ENCODE measurements at regions of chr14 and their contacts with region 1.

Region 1: DNA sequence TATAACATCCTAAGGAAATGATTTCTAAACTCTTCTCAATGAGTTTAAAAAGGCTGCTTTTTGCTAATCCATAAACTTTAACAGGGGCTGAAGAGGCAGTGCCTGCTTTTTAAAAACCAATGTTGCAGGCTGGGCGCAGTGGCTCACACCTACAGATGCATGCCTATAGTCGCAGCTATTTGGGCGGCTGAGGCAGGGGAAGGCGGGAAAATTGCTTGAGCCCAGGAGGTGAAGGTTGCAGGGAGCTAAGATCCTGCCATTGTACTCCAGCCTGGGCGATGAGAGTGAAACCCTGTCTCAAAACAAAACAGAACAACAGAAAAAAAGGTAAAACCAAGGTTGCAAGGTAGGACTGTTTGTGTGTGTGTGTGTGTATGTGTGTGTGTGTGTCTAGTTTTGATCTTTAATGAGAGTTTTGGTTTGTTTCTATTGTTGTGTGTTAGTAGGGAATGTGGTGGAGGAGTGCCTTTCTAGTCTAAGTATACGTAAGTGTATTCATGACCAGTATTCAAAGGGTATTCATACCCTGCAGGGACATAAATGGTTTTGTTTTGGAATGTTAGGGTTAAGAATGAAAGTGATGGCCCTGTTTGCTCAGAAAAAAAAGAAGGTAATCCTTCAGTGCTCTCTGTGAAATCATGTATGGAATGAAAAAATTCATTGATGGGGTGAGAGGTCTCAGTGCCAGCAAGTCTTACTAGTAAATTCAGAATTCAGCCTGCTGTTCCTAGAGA is 531.0 kb downstream of the DIO2 start:
- DNase-seq: no peak
- ATAC-seq: no peak
- H3K4me3 ChIP-seq: no peak overlapping the region
- H3K27ac ChIP-seq: no peak overlapping the region
- H3K4me1 ChIP-seq: no peaks in the 10 kb centered on the region
- H3K27me3 ChIP-seq: no peaks in the 10 kb centered on the region
- CTCF ChIP-seq: no peak

Region 2: DNA sequence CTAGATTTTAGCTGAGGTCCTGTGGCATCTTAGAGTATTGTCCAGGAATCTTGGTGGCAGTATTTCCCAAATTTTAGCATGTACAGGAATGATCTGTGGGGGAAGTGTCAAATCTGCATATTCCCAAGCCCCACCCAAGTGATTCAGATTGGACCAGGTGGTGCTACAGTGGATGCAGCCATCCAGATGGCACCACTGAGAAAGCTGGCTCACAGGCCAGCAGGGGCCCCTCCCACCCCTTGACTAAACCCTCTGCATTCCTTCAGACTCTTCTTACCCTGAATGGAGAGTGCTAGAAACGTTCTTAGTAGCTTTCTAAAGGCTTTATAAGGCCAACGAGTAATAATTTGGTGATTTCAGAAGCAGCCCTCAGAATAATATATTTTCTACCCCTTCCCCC is 1254.9 kb before region 1 on chr14:
- intact Hi-C with region 1: loop called in 1 of 10 experiments (anchors 5 kb)
- DNase-seq: no peak
- ATAC-seq: no peak
- H3K4me3 ChIP-seq: no peak overlapping the region
- H3K27ac ChIP-seq: no peak overlapping the region
- H3K4me1 ChIP-seq: peaks cover 0 to 4% (median 0%) of the 10 kb centered on the region in 9 donors
- H3K27me3 ChIP-seq: peaks cover 0 to 6% (median 0%) of the 10 kb centered on the region in 7 donors
- CTCF ChIP-seq: no peak

Measured in heart right ventricle (tissue), 16 donors.